ENCODE measurements at regions of chr4 and their contacts with region 1.

Region 1: GRCh38 chr4:88366460-88366859 is 12.2 kb upstream of the HERC6 start:
- DNase-seq: no peak
- H3K4me3 ChIP-seq: no peak overlapping the region
- H3K27ac ChIP-seq: no peak overlapping the region
- H3K4me1 ChIP-seq: peaks cover 0 to 5% (median 0%) of the 10 kb centered on the region in 6 donors
- H3K27me3 ChIP-seq: no peaks in the 10 kb centered on the region
- CTCF ChIP-seq: no peak
- POLR2A ChIP-seq: no peak

Region 2: DNA sequence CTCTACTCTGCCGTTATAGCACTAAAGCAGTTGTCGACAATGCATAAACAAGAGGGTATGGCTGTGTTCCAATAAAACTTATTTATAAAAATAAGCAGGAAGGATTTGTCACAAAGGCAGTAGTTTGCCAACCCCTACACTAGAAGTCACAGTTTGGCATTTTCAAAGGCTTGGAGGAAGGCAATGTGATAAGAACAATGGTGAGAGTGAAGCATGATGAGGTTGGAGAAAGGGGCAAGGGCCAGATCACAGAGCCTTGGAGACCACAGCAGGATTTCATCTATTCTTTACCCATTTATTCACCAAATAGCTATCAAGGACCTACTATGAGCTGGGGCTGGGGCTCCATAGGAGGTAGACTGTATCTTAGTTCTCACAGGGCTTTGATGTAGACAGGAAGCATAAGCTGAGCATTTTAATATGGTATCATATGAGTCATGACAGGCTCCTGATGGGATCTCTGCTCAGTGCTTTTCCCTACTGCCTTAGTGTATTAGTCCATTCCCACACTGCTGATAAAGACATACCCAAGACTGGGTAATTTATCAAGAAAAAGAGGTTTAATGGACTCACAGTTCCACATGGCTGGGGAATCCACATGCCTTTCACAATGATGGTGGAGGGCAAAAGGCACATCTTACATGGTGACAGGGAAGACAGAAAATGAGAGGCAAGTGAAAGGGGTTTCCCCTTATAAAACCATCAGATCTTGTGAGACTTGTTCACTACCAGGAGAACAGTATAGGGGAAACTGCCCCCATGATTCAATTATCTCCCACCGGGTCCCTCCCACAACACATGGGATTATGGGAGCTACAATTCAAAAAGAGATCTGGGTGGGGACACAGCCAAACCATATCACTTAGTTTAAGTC is 141.0 kb before region 1 on chr4:
- intact Hi-C with region 1: loop called (anchors 10 kb)
- DNase-seq: no peak
- H3K4me3 ChIP-seq: no peak overlapping the region
- H3K27ac ChIP-seq: no peak overlapping the region
- H3K4me1 ChIP-seq: peaks cover 0 to 3% (median under 1%) of the 10 kb centered on the region in 6 donors
- H3K27me3 ChIP-seq: no peaks in the 10 kb centered on the region
- CTCF ChIP-seq: no peak
- POLR2A ChIP-seq: no peak

Region 3: GRCh38 chr4:88503344-88503743 is 136.9 kb after region 1 on chr4:
- intact Hi-C with region 1: no loop called
- DNase-seq: no peak
- H3K4me3 ChIP-seq: no peak overlapping the region
- H3K27ac ChIP-seq: no peak overlapping the region
- H3K4me1 ChIP-seq: no peaks in the 10 kb centered on the region
- H3K27me3 ChIP-seq: no peaks in the 10 kb centered on the region
- CTCF ChIP-seq: no peak
- POLR2A ChIP-seq: no peak

Measured in spleen (tissue), 13 donors.